HEK293T (cell line): ENCODE measurements at regions of chr18 and their contacts with region 1.

Region 1: GRCh38 chr18:21099442-21099841 is 12.2 kb downstream of the ROCK1 start:
- DNase-seq: no peak

Region 2: DNA sequence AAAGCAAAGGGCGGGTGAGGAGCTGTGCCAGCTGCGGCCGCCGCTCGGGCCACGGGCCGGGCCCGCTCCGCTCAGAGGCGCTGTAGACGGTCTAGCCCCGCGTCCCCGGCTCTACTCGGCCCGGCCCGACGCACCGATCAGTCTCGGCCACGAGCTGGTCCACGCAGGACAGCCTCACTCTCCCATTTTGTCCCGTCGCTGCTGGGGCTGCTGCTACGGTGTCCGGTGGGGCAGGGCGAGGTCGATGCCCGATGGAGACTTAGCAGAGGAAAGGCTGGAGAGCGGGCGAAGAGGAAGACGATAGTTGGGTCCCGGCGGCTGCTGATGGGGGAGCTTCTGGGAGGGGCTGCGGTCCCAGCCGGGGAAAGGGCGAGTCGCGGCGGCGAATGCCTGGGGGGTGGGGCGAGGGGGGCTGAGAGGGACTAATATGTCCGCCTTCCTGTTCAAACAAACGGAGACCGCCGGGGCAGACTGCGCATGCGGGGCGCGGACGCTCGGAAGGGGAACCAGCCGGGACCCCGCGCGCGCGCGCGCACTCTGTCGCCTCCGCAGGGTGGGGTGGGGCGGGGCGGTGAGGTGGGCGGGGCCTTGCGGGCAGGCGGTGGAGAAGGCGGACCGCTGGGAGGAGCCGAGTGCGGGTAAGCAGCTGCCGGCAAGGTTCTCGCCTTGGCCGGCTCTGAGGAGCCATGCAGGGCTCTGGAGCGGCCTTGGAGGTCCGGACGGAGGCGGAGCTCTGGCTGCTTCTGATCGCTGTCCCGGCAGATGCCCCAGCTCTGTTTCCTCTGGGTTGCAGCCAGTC is 12.1 kb after region 1 on chr18 and contains the start of gene ROCK1:
- CTCF ChIA-PET with region 1: no interaction called
- POLR2A ChIA-PET with region 1: interaction called, 16 read pairs
- DNase-seq: peak; percentile 98